Calu3 (cell line): ENCODE measurements at regions of chr5 and their contacts with region 1.

Region 1: DNA sequence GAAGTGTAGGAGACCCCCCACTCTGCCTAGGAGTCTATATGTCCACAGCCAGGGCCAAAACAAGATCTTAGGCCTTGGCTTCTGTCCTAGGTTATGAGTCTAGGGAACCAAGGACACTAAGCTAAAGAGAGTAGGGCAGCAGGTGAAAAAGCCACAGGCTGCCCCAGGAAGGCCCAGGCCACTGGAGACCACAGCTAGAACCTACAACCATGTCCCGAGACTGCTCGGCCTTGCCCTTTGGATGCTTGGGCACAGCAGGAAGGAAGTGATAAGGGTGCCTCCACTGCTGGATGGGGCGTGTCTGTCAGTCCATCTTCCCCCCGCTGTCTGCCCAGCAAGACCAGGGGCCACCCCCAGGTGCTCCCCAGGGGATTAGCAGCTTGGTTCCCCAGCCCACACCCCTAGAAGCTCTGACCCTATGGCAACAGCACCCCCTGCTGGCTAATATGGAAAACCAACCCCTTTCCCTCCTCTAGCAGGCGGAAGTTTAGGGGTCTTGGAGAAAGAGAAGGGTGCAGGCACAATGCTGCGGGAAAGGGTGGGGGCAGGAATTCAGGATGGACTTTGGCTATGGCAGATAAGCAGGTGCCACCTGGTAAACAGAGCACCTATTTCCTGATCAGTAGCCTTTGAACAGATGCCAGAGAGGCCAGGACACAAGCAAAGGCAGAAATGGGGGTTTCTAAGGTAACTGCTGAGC is 10.5 kb upstream of the IRF1 start:
- DNase-seq: peak; percentile 78
- H3K4me3 Mint-ChIP-seq: no peak overlapping the region
- H3K27ac Mint-ChIP-seq: peak overlapping the region; percentile 7
- H3K4me1 Mint-ChIP-seq: peaks cover 70% of the 10 kb centered on the region
- H3K27me3 Mint-ChIP-seq: no peaks in the 10 kb centered on the region
- CTCF ChIP-seq: peak; percentile 94

Region 2: DNA sequence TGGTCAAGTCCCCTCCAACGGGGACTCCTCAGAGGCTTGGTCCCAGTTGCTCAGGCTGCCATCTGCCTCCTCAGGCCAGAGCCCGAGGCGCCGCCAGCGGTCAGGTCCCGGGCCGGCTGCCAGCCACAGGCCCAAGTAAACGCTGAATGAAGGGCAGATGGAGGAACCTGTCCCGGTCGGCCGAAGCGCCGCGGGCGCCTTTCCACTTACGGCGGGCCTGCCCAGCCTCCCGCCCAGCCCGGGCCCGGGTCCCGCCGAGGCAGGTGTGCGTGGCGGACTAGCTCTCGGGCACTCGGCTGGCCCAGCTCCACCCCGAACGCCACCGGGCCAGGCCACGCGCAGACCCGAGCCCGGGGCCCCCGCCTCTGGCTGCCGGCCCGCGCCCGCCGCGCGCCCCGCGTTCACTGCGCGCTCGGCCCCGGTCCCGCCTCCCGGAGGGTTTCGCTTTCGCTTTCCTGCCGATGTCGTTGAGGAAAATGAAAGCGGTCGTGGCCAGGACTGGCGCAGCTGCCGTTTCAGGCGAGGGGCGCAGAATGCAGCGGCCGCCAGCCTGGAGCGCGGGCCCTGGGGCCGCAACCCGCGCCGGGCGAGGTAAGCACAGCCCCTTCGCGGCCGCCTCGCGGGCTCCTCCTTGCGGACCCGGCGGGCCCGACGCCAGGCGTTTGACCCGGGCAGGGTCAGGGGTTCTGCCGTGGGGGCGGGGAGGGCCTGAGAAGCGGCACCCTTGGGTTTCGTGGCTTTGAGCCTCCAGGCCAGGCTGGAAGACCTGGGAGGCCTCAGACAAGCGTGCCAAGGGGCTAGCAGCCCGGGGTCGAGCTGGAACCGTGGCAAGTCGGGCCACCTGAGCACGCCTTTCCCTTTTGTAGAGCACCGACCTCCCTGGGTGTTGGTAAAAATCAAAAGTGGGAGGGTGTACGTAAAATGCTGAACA is 90.4 kb before region 1 on chr5:
- CTCF ChIA-PET with region 1: interaction called, 10 read pairs
- intact Hi-C with region 1: loop called (anchors 2 kb)
- DNase-seq: peak; percentile 91
- H3K4me3 Mint-ChIP-seq: peak overlapping the region; percentile 75
- H3K27ac Mint-ChIP-seq: peak overlapping the region; percentile 78
- H3K4me1 Mint-ChIP-seq: peaks cover 59% of the 10 kb centered on the region
- H3K27me3 Mint-ChIP-seq: no peaks in the 10 kb centered on the region
- CTCF ChIP-seq: peak; percentile 85

Region 3: DNA sequence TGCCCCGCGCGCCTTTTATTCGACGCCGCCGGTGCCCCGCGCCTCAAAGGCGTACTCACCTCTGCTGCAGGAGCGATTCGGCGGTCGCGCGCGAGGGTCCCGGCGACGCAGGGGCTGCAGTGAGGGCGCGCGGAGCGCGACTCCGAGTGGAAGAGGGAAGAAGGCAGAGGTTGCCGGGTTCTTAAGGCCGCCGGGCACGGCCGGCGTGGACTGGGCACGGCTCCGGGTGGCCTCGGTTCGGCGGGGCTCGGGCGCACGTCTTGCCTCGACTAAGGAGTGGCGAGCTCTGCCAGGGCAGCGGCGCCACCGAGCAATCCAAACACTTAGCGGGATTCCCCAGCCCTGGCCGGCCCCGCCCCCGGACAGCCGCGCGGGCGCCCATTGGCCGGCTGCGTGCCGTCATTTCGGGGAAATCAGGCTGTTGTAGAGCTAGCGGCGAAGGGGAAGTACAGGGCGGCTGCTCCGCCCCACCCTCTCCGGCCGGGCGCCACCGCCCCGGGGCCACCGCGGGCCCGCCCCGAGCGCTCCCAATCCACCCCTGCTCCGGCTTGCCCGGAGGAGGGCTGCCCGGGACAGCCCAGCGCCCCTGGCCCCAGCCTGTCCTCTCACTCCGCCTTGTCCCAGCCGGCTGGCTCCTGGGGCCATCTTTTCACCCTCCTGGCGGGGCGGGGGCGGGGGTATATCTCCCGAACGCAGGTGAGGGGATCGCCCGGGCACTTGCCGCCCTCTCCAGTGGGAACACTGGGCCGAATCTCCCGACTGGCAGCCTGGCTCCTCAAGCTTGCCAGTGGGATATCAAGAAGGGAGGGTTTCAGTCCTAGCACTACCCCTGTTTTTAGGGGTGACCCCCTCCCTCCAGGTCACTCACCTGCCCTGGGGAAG is 10.4 kb before region 1 on chr5 and contains the start of gene IRF1:
- CTCF ChIA-PET with region 1: interaction called, 23 read pairs
- intact Hi-C with region 1: no loop called
- DNase-seq: peak; percentile 99
- H3K4me3 Mint-ChIP-seq: peak within 1 kb of the TSS; percentile 89
- H3K27ac Mint-ChIP-seq: peak within 1 kb of the TSS; percentile 76
- H3K4me1 Mint-ChIP-seq: peaks cover 46% of the 10 kb centered on the region
- H3K27me3 Mint-ChIP-seq: no peaks in the 10 kb centered on the region
- CTCF ChIP-seq: no peak
- total RNA-seq, gene IRF1: 64.0 and 82.4 TPM in 2 replicates

Region 4: DNA sequence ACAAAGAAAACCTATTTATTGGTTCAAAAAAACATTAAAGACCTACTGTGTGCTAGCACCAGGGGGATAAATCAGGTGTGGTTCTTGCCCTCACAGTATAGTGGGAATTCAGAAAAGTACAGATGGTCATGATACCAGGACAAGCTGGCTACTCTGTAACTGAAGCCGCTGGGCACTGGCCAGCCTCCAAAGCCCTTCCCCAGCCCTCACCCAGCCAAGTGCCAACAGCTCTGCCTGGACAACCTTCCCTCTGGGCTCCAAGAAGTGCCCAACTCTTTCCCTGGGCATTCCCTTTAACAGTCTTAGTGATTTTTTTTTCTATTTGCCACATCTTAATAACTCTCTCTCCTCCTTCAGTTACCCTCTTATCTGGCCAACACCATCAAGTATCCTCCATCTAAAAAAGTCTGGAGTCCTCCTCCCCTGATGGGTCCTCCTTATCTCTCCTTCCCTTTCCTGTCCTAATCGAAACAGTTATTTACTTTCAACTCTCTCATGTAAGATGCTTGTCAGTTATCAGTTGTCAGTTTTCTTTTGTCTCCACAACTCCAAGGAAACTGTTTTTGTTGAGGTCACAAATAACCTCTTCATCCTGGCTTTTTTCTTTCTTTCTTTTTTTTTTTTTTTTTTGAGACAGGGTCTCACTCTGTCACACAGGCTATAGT is 289.3 kb after region 1 on chr5:
- CTCF ChIA-PET with region 1: no interaction called
- intact Hi-C with region 1: no loop called
- DNase-seq: no peak
- H3K4me3 Mint-ChIP-seq: no peak overlapping the region
- H3K27ac Mint-ChIP-seq: no peak overlapping the region
- H3K4me1 Mint-ChIP-seq: no peaks in the 10 kb centered on the region
- H3K27me3 Mint-ChIP-seq: peaks cover 31% of the 10 kb centered on the region
- CTCF ChIP-seq: no peak

Region 5: GRCh38 chr5:133015466-133015865 is 514.4 kb after region 1 on chr5:
- CTCF ChIA-PET with region 1: interaction called, 13 read pairs
- intact Hi-C with region 1: no loop called
- DNase-seq: no peak
- H3K4me3 Mint-ChIP-seq: no peak overlapping the region
- H3K27ac Mint-ChIP-seq: no peak overlapping the region
- H3K4me1 Mint-ChIP-seq: peaks cover 23% of the 10 kb centered on the region
- H3K27me3 Mint-ChIP-seq: no peaks in the 10 kb centered on the region
- CTCF ChIP-seq: no peak